IMR-90 (cell line): ENCODE measurements at regions of chr15 and their contacts with region 1.

Region 1: DNA sequence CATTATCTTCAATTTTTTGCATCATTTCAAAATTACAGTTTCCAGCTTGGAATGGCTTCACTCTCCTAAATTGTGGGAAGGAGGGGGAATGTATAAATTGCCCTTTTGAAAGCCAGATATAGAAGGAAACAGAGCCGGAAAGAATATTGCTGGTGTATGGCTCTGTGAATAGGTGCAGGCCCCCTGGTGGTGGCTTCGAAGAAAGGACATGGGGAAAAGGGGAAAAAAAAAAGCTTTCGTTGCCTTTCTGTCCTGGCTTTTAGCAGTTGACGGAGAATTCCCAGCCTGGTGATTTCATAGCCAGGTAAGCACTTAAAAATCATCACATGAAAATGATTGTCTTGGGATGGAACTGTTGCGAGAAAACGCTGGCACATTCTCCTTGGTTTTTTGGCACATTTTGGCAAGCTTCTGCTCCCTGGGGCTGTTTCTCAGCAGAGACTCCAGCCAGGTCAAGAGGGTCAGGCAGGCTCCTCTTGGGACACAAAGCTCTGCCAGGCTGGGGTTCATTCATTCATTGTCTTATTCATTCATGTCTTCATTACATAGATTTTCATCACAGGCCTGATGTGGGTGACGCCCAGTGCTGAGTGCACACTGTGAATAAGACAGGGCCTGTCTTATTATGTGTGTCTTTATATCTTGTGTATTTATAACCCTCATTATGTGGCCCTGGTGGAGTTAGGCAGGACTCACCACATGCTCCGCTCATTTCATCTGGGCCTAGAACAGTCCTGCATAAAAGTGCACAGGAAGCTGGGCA is 300.0 kb upstream of the TPM1 start:
- DNase-seq: peak; percentile 90
- ATAC-seq: peak; percentile 81
- H3K4me3 ChIP-seq: no peak overlapping the region
- H3K27ac ChIP-seq: peak overlapping the region; percentile 31; the same call in 1 of the 2 replicates
- H3K4me1 ChIP-seq: peaks cover 17% of the 10 kb centered on the region
- H3K27me3 ChIP-seq: no peaks in the 10 kb centered on the region
- CTCF ChIP-seq: peak; percentile 83
- POLR2A ChIP-seq: no peak
- RAD21 ChIP-seq: peak; percentile 75

Region 2: DNA sequence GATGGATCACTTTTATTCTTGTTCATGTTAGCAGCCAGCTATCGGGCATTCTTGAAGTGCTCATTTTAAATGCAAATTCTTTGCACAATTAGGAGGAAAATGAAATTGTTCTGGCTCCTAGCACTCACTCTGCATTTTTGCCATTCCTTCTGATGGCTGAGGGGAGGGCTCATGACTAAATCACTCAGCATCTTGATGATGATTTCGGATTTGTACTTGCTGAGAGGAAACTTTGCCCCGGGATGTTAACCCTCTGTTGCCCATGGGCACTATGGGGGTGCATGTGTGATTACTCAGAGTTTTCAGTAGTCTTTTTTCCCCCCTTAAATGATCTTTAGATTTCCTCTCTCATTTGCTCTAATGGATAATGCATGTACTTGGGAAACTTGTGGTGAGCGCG is 277.9 kb before region 1 on chr15:
- CTCF ChIA-PET with region 1: no interaction called
- POLR2A ChIA-PET with region 1: no interaction called
- dilution Hi-C with region 1: no loop called
- in situ Hi-C with region 1: no loop called
- intact Hi-C with region 1: loop called (anchors 2 kb)
- DNase-seq: peak; percentile 67
- ATAC-seq: peak; percentile 89
- H3K4me3 ChIP-seq: no peak overlapping the region
- H3K27ac ChIP-seq: no peak overlapping the region
- H3K4me1 ChIP-seq: peaks cover 16% of the 10 kb centered on the region
- H3K27me3 ChIP-seq: no peaks in the 10 kb centered on the region
- CTCF ChIP-seq: no peak
- POLR2A ChIP-seq: no peak
- RAD21 ChIP-seq: no peak

Region 3: GRCh38 chr15:62618432-62618831 is 124.2 kb before region 1 on chr15:
- CTCF ChIA-PET with region 1: no interaction called
- POLR2A ChIA-PET with region 1: no interaction called
- dilution Hi-C with region 1: no loop called
- in situ Hi-C with region 1: no loop called
- intact Hi-C with region 1: loop called (anchors 5 kb)
- DNase-seq: peak; percentile 94
- ATAC-seq: peak; percentile 91
- H3K4me3 ChIP-seq: no peak overlapping the region
- H3K27ac ChIP-seq: no peak overlapping the region
- H3K4me1 ChIP-seq: peaks cover 17% of the 10 kb centered on the region
- H3K27me3 ChIP-seq: no peaks in the 10 kb centered on the region
- CTCF ChIP-seq: peak; percentile 65
- POLR2A ChIP-seq: no peak
- RAD21 ChIP-seq: peak; percentile 59

Region 4: GRCh38 chr15:62758126-62758951 is 15.7 kb after region 1 on chr15:
- CTCF ChIA-PET with region 1: interaction called, 18 read pairs
- POLR2A ChIA-PET with region 1: no interaction called
- dilution Hi-C with region 1: no loop called
- in situ Hi-C with region 1: no loop called
- intact Hi-C with region 1: no loop called
- DNase-seq: peak; percentile 90
- ATAC-seq: peak; percentile 94
- H3K4me3 ChIP-seq: no peak overlapping the region
- H3K27ac ChIP-seq: peak overlapping the region; percentile 45; the same call in 1 of the 2 replicates
- H3K4me1 ChIP-seq: peaks cover 10% of the 10 kb centered on the region
- H3K27me3 ChIP-seq: no peaks in the 10 kb centered on the region
- CTCF ChIP-seq: no peak
- POLR2A ChIP-seq: 0 out of 2 replicates have a peak, but pooled peaks have one; percentile 32
- RAD21 ChIP-seq: no peak